Activated CD4-positive, alpha-beta T cell treated with anti-CD3 and anti-CD28 coated beads, Interleukin-2, amount 10 ng/mL, durations not matched to agents 7 days and 5 days (primary cell): ENCODE measurements at regions of chr12 and their contacts with region 1.

Region 1: GRCh38 chr12:107525719-107526554 is 159.7 kb upstream of the PWP1 start:
- DNase-seq: no peak
- H3K4me3 Mint-ChIP-seq: no peak overlapping the region
- H3K27ac Mint-ChIP-seq: no peak overlapping the region
- H3K4me1 Mint-ChIP-seq: no peaks in the 10 kb centered on the region
- H3K27me3 Mint-ChIP-seq: no peaks in the 10 kb centered on the region

Region 2: GRCh38 chr12:107486140-107486892 is 39.6 kb before region 1 on chr12:
- CTCF ChIA-PET with region 1: no interaction called
- POLR2A ChIA-PET with region 1: interaction called, 12 read pairs
- DNase-seq: no peak
- H3K4me3 Mint-ChIP-seq: no peak overlapping the region
- H3K27ac Mint-ChIP-seq: no peak overlapping the region
- H3K4me1 Mint-ChIP-seq: peaks cover 14% of the 10 kb centered on the region
- H3K27me3 Mint-ChIP-seq: no peaks in the 10 kb centered on the region

Region 3: GRCh38 chr12:107558141-107558815 is 32.3 kb after region 1 on chr12:
- CTCF ChIA-PET with region 1: no interaction called
- POLR2A ChIA-PET with region 1: no interaction called
- DNase-seq: no peak
- H3K4me3 Mint-ChIP-seq: no peak overlapping the region
- H3K27ac Mint-ChIP-seq: no peak overlapping the region
- H3K4me1 Mint-ChIP-seq: peaks cover 2% of the 10 kb centered on the region
- H3K27me3 Mint-ChIP-seq: no peaks in the 10 kb centered on the region